ENCODE measurements at regions of chr10 and their contacts with region 1.

Region 1: GRCh38 chr10:73644015-73644743 is 2.9 kb upstream of the MYOZ1 start:
- DNase-seq: peak; percentile 63
- H3K4me3 Mint-ChIP-seq: no peak overlapping the region
- H3K27ac Mint-ChIP-seq: no peak overlapping the region
- H3K4me1 Mint-ChIP-seq: peaks cover 15% of the 10 kb centered on the region
- H3K27me3 Mint-ChIP-seq: peaks cover 8% of the 10 kb centered on the region

Region 2: DNA sequence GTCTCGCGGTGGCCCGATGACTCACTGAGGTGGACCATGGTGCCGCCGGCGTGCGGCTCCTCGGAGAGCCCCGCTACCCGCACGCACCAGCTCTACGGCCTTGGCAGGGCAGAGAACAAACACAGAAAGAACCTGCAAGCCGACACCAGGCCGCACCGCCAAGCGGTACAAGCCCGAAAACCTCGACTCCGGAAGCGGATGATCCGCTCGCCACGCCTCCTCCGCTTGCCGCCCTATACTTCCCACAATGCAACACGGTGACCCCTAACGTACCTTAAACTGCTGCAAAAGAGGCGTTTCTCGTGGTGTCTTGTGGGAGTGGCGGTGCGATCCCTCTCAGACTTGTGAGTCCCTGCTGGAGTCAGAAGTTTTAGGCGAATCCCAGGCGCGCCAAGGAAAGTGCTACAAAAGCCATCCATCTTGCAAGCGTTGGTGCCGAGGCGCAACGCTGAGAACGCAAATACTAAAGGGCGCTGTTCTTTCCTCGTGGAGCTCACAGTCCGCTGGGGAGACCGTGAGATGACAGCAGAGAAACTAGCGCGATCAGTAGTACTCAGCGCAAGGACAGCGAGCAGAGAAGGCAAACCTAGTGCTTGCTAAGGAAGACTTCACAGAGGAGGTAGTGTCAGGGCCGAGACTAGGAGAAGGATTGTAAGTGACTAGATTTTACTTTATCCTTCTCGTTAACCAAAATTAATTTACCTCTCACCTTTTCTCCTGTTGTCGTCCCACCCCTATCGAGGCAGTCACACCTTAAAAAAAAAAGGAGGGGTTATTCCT is 391.5 kb before region 1 on chr10 and contains the start of gene MRPS16:
- CTCF ChIA-PET with region 1: no interaction called
- intact Hi-C with region 1: loop called (anchors 1 kb)
- DNase-seq: peak; percentile 97
- H3K4me3 Mint-ChIP-seq: peak within 1 kb of the TSS; percentile 98
- H3K27ac Mint-ChIP-seq: peak within 1 kb of the TSS; percentile 94
- H3K4me1 Mint-ChIP-seq: peaks cover 38% of the 10 kb centered on the region
- H3K27me3 Mint-ChIP-seq: no peaks in the 10 kb centered on the region
- total RNA-seq, gene MRPS16: 140 to 145 TPM

Region 3: DNA sequence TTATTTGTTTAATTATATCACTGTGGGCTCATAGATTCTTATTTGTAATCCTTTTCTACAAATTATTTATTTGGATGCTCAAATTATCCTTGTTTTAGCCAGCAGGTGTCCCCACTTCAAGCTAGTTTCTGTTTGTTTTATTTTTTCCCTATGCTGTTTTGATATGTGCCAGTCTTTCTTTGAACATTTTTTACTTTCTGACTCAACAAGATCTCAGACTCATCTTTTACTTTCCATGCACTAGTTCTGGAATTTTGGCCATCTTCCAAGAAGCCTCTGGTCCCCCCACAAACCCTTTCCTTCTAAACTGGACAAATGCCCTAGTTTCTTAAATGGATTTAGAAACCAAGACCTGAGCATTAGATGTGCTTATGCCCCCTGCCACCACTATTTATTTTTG is 380.2 kb before region 1 on chr10:
- CTCF ChIA-PET with region 1: interaction called, 5 read pairs
- intact Hi-C with region 1: loop called (anchors 1 kb)
- DNase-seq: no peak
- H3K4me3 Mint-ChIP-seq: no peak overlapping the region
- H3K27ac Mint-ChIP-seq: no peak overlapping the region
- H3K4me1 Mint-ChIP-seq: peaks cover 3% of the 10 kb centered on the region
- H3K27me3 Mint-ChIP-seq: no peaks in the 10 kb centered on the region

Region 4: DNA sequence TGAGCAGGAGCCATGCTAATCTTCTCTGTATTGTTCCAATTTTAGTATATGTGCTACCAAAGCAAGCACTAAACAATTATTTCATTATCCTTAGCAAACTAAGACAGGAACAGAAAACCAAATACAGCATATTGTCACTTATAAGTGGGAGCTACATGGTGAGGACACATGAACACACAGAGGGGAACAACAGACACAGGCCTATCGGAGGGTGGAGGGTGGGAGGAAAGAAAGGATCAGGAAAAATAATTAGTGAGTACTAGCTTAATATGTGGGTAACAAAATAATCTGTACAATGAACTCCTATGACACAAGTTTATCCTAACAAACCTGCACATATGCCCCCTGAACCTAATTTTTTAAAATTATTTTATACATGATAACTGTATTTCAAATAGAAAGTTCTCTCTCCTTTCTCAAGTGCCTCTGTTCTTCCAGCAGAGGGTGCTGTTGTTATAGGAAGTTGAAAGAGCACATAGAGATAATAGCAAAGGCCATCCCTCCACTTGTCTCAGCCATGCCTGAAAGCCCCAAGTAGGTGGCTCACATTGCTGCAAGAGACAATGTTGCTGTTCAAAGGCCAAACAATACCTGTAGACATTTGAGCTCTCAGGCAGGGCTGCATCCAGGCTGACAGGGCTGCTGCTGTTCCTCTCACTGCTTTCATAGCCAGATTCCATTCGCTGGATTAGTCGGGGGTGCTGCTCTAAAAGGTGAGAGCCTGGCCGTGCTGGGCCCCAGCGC is 114.9 kb before region 1 on chr10:
- CTCF ChIA-PET with region 1: interaction called, 114 read pairs
- intact Hi-C with region 1: loop called (anchors 1 kb)
- DNase-seq: peak; percentile 60
- H3K4me3 Mint-ChIP-seq: no peak overlapping the region
- H3K27ac Mint-ChIP-seq: no peak overlapping the region
- H3K4me1 Mint-ChIP-seq: no peaks in the 10 kb centered on the region
- H3K27me3 Mint-ChIP-seq: no peaks in the 10 kb centered on the region

Region 5: GRCh38 chr10:73591935-73592699 is 52.1 kb before region 1 on chr10:
- CTCF ChIA-PET with region 1: interaction called, 6 read pairs
- intact Hi-C with region 1: loop called (anchors 5 kb)
- DNase-seq: peak; percentile 59
- H3K4me3 Mint-ChIP-seq: no peak overlapping the region
- H3K27ac Mint-ChIP-seq: peak overlapping the region; percentile 71
- H3K4me1 Mint-ChIP-seq: peaks cover 17% of the 10 kb centered on the region
- H3K27me3 Mint-ChIP-seq: no peaks in the 10 kb centered on the region

Measured in activated naive CD4-positive, alpha-beta T cell treated with anti-CD3 and anti-CD28 coated beads for 36 hours (primary cell).